Aorta (tissue), 5 donors: ENCODE measurements at regions of chr13 and their contacts with region 1.

Region 1: DNA sequence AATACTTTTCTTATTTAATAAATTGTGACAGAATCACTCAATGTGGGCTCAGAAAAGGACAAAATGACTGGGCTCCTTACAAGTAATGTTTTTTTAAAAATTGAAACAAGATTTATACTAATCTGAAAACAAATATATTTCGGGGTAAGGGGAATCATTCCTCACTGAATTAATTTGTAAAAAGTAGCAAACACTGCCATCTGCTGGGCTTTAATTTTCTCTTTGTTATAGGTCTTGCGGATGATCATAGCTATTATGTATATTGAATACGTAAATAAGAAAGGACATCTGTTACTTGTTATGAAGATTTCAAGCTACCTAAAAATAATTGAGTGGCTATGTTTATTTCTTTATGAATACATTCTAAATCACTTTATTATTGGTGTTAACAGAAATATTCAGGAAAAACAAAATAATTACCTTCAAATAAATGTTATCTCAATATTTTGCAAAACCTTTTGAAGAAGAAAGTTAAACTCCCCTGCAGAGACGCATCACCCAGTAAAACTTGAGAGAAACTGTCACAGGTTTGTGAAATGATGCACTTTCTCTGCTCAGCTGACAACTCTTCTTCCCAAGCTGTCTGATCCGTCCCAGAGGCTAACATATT is 17.8 kb upstream of the ENOX1 start:
- DNase-seq: no peak
- ATAC-seq: no peak
- H3K4me3 ChIP-seq: no peak overlapping the region
- H3K27ac ChIP-seq: no peak overlapping the region
- H3K4me1 ChIP-seq: peaks cover 0 to 3% of the 10 kb centered on the region in 2 donors
- H3K27me3 ChIP-seq: no peaks in the 10 kb centered on the region

Region 2: DNA sequence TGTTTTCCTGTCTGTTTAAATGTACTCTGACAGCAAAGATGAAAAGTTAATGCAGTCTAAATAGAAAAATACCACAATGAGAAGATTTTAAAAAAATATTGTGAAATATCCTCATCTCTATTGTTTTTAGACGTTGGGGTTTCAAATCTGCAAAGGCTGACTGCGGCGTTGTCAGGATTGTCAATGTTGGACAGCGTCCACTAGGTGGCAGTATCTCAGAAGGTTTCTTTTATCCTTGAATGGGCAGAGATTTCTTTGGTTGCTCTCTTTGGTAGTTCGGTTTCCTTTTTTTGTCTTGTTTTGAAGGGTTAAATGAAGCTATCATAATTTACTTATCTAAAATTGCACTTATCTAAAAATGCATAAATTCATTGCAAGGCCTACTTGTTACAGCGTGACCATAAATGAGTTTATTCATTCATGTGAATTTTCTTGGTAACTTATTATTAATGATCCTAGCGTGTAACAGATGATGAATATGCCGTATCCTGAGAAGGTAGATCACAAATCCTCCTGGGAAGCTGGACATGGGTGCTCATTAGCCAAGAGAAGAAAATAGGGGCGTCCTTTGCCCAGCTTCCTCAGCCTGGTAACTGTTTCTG is 1209.5 kb before region 1 on chr13:
- intact Hi-C with region 1: loop called (anchors 10 kb)
- DNase-seq: peak in 1 of 2 donors; percentile 46
- ATAC-seq: peak; percentile 73
- H3K4me3 ChIP-seq: no peak overlapping the region
- H3K27ac ChIP-seq: no peak overlapping the region
- H3K4me1 ChIP-seq: no peaks in the 10 kb centered on the region
- H3K27me3 ChIP-seq: no peaks in the 10 kb centered on the region

Region 3: GRCh38 chr13:42969558-42970172 is 834.9 kb before region 1 on chr13:
- intact Hi-C with region 1: loop called (anchors 5 to 10 kb)
- DNase-seq: peak; percentile 79 to 93
- ATAC-seq: peak; percentile 88
- H3K4me3 ChIP-seq: no peak overlapping the region
- H3K27ac ChIP-seq: no peak overlapping the region
- H3K4me1 ChIP-seq: no peaks in the 10 kb centered on the region
- H3K27me3 ChIP-seq: no peaks in the 10 kb centered on the region

Region 4: DNA sequence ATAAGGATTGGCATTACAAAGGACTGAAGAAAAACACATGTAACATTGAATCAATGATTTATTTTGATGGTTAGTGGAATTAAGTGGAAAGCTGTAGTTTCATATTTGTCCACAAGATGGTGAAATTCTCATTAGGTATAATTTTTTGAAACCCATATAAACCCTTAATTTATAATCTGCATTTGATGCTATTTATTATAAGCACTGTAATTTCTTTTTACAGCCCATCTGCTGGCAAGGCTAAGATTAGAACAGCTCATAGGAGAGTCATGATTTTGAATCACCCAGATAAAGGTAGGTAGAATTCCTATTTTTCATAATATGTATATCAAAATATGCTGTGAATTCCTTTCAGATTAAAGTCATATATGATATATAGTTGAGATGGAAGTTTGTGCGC is 719.0 kb before region 1 on chr13:
- intact Hi-C with region 1: loop called (anchors 5 kb)
- DNase-seq: no peak
- ATAC-seq: no peak
- H3K4me3 ChIP-seq: no peak overlapping the region
- H3K27ac ChIP-seq: no peak overlapping the region
- H3K4me1 ChIP-seq: no peaks in the 10 kb centered on the region
- H3K27me3 ChIP-seq: no peaks in the 10 kb centered on the region

Region 5: GRCh38 chr13:43303033-43303729 is 501.4 kb before region 1 on chr13:
- intact Hi-C with region 1: loop called (anchors 2 to 5 kb)
- DNase-seq: peak; percentile 68 to 78
- ATAC-seq: peak; percentile 67
- H3K4me3 ChIP-seq: no peak overlapping the region
- H3K27ac ChIP-seq: no peak overlapping the region
- H3K4me1 ChIP-seq: no peaks in the 10 kb centered on the region
- H3K27me3 ChIP-seq: no peaks in the 10 kb centered on the region